Sciatic nerve (tissue), 2 donors: ENCODE measurements at regions of chr18 and their contacts with region 1.

Region 1: GRCh38 chr18:62856294-62856693 is 141.0 kb downstream of the PHLPP1 start:
- DNase-seq: no peak
- ATAC-seq: no peak

Region 2: GRCh38 chr18:62867534-62867933 is 11.2 kb after region 1 on chr18:
- intact Hi-C with region 1: no loop called
- DNase-seq: no peak
- ATAC-seq: no peak

Region 3: DNA sequence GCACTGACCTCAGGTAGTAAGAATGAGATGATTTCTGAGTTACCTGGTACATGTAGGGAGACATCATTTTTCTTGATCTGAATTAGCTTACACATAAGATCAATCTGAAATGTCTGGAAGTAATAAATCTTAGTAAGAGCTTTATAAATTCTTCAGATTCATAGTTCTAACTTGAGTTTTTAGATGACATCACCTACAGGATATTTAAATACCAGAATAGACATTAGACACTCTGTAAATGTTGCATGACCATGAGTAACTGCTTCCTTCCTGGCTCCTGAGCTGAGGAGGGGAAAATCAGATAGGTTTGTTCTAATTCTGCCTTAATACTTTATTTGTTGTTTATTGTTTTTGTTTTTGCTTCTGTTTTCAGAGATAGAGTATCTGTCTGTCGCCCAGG is 40.9 kb after region 1 on chr18:
- intact Hi-C with region 1: loop called (anchors 1 kb)
- DNase-seq: no peak
- ATAC-seq: no peak